ENCODE measurements at regions of chr19 and their contacts with region 1.

Region 1: DNA sequence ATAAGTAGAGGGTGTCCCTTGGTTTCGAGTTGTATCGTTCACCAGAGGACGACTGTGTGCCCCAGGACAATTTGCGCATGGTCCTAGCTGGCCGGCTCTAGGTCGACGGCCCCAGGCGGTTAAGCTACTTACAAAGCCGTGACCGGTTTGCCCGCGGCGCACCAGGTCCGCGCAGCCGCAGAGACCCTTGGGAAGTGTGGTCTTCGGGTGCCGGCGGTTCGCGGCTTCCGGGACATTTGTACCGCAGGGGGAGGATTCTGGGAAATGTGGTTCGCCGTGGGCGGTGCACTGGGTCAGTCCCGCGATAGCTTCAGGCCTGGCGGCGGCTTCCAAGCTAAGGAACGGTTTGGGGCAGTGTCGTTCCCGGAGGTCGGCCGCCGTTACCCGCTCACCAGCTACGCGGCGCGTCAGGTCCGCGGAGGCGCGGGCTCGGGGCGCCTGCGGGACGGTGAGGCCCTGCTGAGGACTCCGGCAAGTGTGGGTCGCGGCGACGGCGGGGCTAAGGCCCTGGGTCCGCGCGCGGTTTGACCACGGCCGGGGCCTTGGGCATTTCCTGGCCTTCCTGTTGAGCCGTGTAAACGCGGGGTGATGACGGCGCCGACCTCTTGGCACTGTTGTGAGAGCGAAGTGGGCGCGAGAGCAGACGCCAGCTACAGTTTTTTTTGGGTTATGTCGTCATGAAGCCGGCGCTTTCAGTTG is at the start of gene ZNF302:
- DNase-seq: peak; percentile 99
- H3K4me3 ChIP-seq: peak within 1 kb of the TSS; percentile 57 to 72 (median 72)
- H3K27ac ChIP-seq: peak within 1 kb of the TSS; percentile 97
- H3K4me1 ChIP-seq: peaks cover 10% of the 10 kb centered on the region
- H3K27me3 ChIP-seq: peaks cover 0 to 2% of the 10 kb centered on the region in 2 experiments
- CTCF ChIP-seq: no peak
- POLR2A ChIP-seq: peak; percentile 79
- total RNA-seq, gene ZNF302: 13.2 and 15.6 TPM in 2 replicates

Region 2: GRCh38 chr19:34712395-34713261 is 35.1 kb after region 1 on chr19:
- CTCF ChIA-PET with region 1: interaction called, 5 read pairs
- POLR2A ChIA-PET with region 1: no interaction called
- dilution Hi-C with region 1: no loop called
- intact Hi-C with region 1: loop called (anchors 2 kb)
- DNase-seq: peak; percentile 75
- H3K4me3 ChIP-seq: no peak overlapping the region
- H3K27ac ChIP-seq: no peak overlapping the region
- H3K4me1 ChIP-seq: no peaks in the 10 kb centered on the region
- H3K27me3 ChIP-seq: peaks cover 3% of the 10 kb centered on the region in 2 experiments
- CTCF ChIP-seq: peak; percentile 39 to 40
- POLR2A ChIP-seq: no peak

Region 3: DNA sequence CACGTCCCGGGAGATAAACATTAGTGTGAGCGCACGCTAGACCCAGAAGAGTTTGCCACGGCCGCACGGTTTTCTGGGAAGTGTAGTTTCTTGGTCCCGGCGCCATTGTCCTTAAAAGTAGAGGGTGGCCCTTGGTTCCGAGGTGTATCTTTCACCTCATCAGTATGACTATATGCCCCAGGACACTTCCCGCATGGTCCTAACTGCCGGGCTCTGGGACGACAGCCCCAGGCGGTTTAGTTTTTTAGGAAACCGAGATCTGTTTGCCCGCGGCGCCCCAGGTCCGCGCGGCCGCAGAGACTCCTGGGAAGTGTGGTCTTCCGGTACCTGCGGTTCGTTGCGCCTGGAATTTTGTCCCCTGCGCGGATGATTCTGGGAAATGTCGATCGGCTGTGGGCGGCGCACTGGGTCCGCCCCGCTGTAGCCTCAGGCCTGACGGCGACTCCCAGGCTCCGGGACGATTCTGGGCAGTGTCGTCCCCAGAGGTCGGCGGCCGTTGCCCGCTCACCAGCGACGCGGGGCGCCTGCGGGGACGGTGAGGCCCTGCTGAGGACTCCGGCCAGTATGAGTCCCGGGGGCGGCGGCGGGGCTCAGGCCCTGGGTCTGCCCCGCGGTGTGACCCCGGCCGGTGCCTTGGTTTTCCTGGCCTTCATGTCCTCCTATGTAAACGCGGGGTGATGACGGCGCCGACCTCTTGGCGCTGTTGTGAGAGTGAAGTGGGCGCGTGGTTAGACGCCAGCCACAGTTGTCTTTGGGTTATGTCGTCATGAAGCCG is 56.5 kb after region 1 on chr19 and contains the start of gene ZNF181:
- CTCF ChIA-PET with region 1: interaction called, 3 read pairs
- POLR2A ChIA-PET with region 1: no interaction called
- dilution Hi-C with region 1: no loop called
- intact Hi-C with region 1: loop called (anchors 1 kb)
- DNase-seq: peak; percentile 90
- H3K4me3 ChIP-seq: peak within 1 kb of the TSS; percentile 64 to 82 (median 75)
- H3K27ac ChIP-seq: peak within 1 kb of the TSS; percentile 85
- H3K4me1 ChIP-seq: peaks cover 3% of the 10 kb centered on the region
- H3K27me3 ChIP-seq: no peaks in the 10 kb centered on the region
- CTCF ChIP-seq: no peak
- POLR2A ChIP-seq: peak; percentile 54
- total RNA-seq, gene ZNF181: 5.0 and 5.1 TPM in 2 replicates

Region 4: GRCh38 chr19:34772697-34773554 is 95.4 kb after region 1 on chr19 and contains the start of gene ZNF599:
- CTCF ChIA-PET with region 1: no interaction called
- POLR2A ChIA-PET with region 1: no interaction called
- dilution Hi-C with region 1: no loop called
- intact Hi-C with region 1: loop called (anchors 1 kb)
- DNase-seq: peak; percentile 91
- H3K4me3 ChIP-seq: peak within 1 kb of the TSS; percentile 64 to 67 (median 66)
- H3K27ac ChIP-seq: peak within 1 kb of the TSS; percentile 2
- H3K4me1 ChIP-seq: peaks cover 7% of the 10 kb centered on the region
- H3K27me3 ChIP-seq: no peaks in the 10 kb centered on the region
- CTCF ChIP-seq: no peak
- POLR2A ChIP-seq: peak; percentile 71
- total RNA-seq, gene ZNF599: 4.5 and 5.0 TPM in 2 replicates